ENCODE measurements at regions of chr14 and their contacts with region 1.

Region 1: DNA sequence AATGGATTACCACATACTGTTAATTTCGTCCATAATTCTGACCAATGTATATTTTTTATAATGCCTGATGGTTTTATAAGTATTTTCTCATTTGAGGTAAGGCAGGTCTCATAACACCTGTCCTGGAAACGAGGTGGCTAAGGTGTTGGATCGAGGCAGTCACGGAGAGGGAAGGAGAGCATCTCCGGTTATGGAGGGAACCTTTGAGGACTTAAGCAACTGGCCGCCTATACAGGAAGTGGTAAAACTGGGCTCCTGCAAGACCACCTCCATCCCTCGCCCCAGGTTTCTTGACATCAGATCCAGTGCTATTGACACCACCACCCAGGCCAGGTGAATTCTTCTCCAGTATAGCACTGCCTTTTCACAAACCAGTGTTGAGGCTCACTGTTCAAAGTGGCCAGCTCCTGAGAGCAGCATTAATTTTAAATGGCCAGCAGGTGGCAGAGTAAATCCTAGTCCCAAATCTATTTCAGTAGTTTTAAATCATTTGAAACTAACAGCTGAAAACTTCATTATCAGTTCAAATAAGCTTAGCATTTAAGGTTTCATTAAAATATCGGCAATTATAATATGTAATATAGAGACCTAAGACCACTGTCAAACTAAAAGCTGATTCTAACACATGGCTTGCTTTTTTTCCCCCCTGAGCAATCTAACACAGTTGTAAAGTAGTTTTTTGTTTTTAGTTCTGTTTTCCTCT is 100.8 kb downstream of the PPM1A start:
- DNase-seq: peak in 1 of 2 donors; percentile 26
- ATAC-seq: peak in 3 of 8 donors; percentile 51 to 73 (median 65)
- H3K4me3 ChIP-seq: peak overlapping the region in 2 of 10 donors; percentile 15 to 27
- H3K27ac ChIP-seq: no peak overlapping the region
- H3K4me1 ChIP-seq: peaks cover 0 to 7% (median 5%) of the 10 kb centered on the region in 9 donors
- H3K27me3 ChIP-seq: peaks cover 0 to 6% (median 0%) of the 10 kb centered on the region in 7 donors
- CTCF ChIP-seq: peak; percentile 41 to 73 (median 67)

Region 2: DNA sequence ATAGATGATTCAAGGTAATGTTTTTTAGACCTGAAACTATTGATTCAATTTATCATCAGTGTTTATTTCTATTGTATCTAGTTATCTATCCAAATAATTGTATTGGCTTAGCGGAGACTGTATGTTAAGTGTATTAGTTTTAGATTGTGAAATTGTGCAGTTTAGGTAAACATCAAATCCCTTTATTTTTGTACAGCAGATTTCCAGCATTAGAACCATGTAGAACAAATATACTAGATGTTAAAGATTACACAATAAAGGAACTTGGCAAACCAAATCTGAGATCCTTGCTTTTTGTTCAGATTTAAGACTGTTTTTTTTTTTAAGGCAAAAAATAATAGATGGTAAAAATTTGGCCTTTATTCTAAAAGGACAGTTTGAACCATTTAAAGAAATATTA is 61.5 kb before region 1 on chr14:
- intact Hi-C with region 1: no loop called
- DNase-seq: no peak
- ATAC-seq: no peak
- H3K4me3 ChIP-seq: no peak overlapping the region
- H3K27ac ChIP-seq: no peak overlapping the region
- H3K4me1 ChIP-seq: no peaks in the 10 kb centered on the region
- H3K27me3 ChIP-seq: no peaks in the 10 kb centered on the region
- CTCF ChIP-seq: no peak

Region 3: DNA sequence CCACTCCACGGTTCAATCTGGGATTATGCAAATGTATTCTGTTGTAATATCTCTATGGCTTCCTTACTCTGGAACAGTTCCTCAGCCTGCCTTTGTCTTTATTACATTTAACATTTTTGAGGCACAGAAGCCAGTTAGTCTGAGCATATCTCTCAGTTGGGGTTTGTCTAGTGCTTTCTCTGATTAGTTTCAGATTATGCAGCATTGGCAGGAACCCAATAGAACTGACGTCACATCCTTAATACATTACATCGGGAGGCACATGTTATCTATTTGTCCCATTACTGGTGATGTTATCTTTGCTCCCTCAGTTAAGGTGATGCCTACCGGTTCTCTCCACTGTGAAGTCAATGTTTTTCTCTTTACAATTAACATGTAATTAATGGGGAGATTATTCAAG is 38.4 kb before region 1 on chr14:
- intact Hi-C with region 1: no loop called
- DNase-seq: no peak
- ATAC-seq: no peak
- H3K4me3 ChIP-seq: no peak overlapping the region
- H3K27ac ChIP-seq: no peak overlapping the region
- H3K4me1 ChIP-seq: no peaks in the 10 kb centered on the region
- H3K27me3 ChIP-seq: peaks cover 0 to 27% (median 9%) of the 10 kb centered on the region in 7 donors
- CTCF ChIP-seq: no peak

Region 4: GRCh38 chr14:60553808-60554207 is 204.0 kb after region 1 on chr14:
- intact Hi-C with region 1: loop called in 2 of 10 experiments (anchors 5 to 10 kb)
- DNase-seq: no peak
- ATAC-seq: no peak
- H3K4me3 ChIP-seq: no peak overlapping the region
- H3K27ac ChIP-seq: no peak overlapping the region
- H3K4me1 ChIP-seq: no peaks in the 10 kb centered on the region
- H3K27me3 ChIP-seq: peaks cover 0 to 41% (median 6%) of the 10 kb centered on the region in 7 donors
- CTCF ChIP-seq: no peak